H1 (cell line): ENCODE measurements at regions of chr6 and their contacts with region 1.

Region 1: DNA sequence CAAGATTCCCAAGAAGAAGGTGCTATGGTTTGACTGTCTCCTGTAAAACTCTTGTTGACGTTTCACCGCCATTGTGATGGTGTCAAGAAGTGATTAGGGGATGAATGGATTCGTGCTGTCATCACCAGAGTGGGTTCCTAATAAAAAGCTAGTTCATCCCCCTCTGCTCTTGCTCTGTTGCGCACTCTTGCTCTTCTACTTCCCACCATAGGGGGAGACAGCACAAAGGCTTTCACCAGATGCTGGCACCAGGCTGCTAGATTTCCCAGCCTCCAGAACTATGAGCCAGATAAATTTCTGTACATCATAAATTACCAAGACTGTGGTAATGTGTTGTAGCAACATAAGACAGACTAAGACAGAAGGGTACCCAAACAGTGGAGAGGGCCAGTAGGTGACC is 21.6 kb upstream of the CCDC28A start:
- DNase-seq: no peak
- H3K4me3 ChIP-seq: no peak overlapping the region
- H3K27ac ChIP-seq: no peak overlapping the region
- H3K4me1 ChIP-seq: no peaks in the 10 kb centered on the region
- H3K27me3 ChIP-seq: no peaks in the 10 kb centered on the region
- CTCF ChIP-seq: peak; percentile 40 to 69 (median 45)
- EP300 ChIP-seq: no peak
- POLR2A ChIP-seq: no peak
- RAD21 ChIP-seq: peak; percentile 24 to 49

Region 2: DNA sequence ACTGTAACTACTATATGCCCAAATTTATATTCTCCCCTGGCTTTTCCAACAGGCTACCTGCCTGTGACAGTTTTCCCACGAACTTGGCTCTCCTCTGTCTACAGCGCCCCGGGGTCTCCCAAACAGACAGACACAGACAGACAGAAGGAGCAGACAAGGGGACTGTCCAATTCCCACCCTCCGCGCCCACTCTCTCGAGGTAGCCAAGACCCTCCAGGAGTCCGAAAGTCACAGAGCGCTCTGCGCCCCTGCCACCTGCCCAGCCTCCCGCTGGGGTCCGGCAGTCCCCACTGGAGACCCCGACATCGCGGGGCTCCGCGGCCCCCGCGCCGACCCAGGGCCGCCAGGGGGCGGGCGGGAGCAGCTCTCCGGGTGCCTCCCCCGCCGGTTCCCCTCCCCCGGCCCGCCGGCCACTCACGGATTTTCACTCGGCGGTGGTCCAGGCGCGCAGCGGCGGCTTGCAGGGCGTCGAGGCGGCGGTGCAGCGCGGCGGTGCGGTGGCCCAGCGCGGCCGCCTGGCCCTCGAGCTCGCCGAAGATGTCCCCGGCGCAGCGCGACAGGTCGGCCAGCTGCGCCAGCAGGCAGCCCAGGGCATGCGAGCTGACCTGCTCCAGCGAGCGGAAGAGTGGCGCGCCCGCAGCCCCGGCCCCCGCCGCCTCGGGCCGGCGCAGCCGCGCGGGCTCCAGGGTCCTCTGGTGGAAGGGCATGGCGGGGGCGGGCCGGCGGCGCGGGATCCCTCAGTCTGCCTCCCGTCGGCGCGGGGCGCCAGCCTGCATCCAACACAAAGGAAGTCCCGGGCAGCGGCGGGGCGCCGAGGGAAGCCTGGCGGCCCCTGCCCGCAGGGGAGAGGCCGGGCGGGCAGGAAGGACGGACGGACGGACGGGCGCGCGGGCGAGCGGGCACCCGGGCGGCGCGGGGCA is 59.7 kb before region 1 on chr6:
- CTCF ChIA-PET with region 1: interaction called, 10 read pairs
- POLR2A ChIA-PET with region 1: no interaction called
- DNase-seq: peak in 1 of 2 experiments; percentile 87
- H3K4me3 ChIP-seq: peak overlapping the region; percentile 74 to 95 (median 83)
- H3K27ac ChIP-seq: peak overlapping the region; percentile 52; the same call in 1 of the 2 replicates
- H3K4me1 ChIP-seq: peaks cover 0 to 6% (median 2%) of the 10 kb centered on the region in 4 experiments; a peak in 4 of 7 replicates
- H3K27me3 ChIP-seq: peaks cover 0 to 3% (median 0%) of the 10 kb centered on the region in 4 experiments; a peak in 2 of 7 replicates
- CTCF ChIP-seq: peak; percentile 52 to 63 (median 62)
- EP300 ChIP-seq: no peak
- POLR2A ChIP-seq: no peak
- RAD21 ChIP-seq: peak; percentile 21 to 50; a peak in 3 of 4 replicates

Region 3: DNA sequence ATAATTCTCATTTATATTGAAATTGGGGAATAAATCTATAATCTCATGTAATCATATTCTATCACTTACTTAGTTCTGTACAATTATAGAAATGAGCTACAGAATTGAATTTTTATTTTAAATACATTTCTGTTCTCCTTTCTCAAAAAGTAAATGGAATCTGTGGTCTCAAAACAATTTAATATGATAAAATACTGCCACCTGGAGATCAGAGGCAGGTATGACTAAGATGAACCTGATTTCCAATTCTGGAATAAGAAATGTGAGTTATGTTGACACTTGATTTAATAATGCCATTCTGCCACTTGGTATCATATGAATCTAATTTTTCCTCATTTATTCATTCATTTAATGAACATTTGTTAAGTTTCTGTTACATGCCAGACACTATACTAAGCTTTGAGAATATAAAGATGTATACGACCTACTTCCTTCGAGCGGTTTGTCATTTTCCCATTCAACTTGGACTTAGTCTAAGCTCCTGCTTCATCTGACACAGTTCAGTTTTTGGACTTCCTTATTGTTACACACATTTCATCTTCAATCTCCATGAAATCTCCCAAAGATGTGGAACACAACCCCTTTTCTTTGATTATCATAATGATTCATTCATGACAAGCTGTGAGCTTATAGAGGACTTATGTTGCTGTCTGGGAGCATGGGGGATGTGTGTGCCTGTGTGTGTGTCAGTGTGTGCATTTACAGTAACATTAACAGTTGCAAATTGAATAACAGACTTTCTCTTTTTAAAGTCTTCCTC is 14.1 kb after region 1 on chr6:
- CTCF ChIA-PET with region 1: interaction called, 37 read pairs
- POLR2A ChIA-PET with region 1: no interaction called
- DNase-seq: no peak
- H3K4me3 ChIP-seq: no peak overlapping the region
- H3K27ac ChIP-seq: no peak overlapping the region
- H3K4me1 ChIP-seq: no peaks in the 10 kb centered on the region
- H3K27me3 ChIP-seq: no peaks in the 10 kb centered on the region
- CTCF ChIP-seq: peak in 2 of 3 experiments; percentile 25 to 43; a peak in 2 of 4 replicates
- EP300 ChIP-seq: no peak
- POLR2A ChIP-seq: no peak
- RAD21 ChIP-seq: peak; percentile 55 to 68